Naive thymus-derived CD4-positive, alpha-beta T cell (primary cell): ENCODE measurements at regions of chr5 and their contacts with region 1.

Region 1: GRCh38 chr5:32422697-32423096 is 21.8 kb downstream of the ZFR start:
- DNase-seq: no peak
- ATAC-seq: no peak
- H3K4me3 ChIP-seq: no peak overlapping the region
- H3K4me3 Mint-ChIP-seq: peak overlapping the region in 1 of 10 donors; percentile 8
- H3K27ac ChIP-seq: no peak overlapping the region
- H3K27ac Mint-ChIP-seq: peak overlapping the region in 3 of 9 donors; percentile 7 to 58 (median 23)
- H3K4me1 ChIP-seq: peaks cover 0 to 4% of the 10 kb centered on the region in 2 donors
- H3K4me1 Mint-ChIP-seq: peaks cover 19 to 76% (median 55%) of the 10 kb centered on the region in 7 donors
- H3K27me3 ChIP-seq: no peaks in the 10 kb centered on the region
- H3K27me3 Mint-ChIP-seq: no peaks in the 10 kb centered on the region

Region 2: DNA sequence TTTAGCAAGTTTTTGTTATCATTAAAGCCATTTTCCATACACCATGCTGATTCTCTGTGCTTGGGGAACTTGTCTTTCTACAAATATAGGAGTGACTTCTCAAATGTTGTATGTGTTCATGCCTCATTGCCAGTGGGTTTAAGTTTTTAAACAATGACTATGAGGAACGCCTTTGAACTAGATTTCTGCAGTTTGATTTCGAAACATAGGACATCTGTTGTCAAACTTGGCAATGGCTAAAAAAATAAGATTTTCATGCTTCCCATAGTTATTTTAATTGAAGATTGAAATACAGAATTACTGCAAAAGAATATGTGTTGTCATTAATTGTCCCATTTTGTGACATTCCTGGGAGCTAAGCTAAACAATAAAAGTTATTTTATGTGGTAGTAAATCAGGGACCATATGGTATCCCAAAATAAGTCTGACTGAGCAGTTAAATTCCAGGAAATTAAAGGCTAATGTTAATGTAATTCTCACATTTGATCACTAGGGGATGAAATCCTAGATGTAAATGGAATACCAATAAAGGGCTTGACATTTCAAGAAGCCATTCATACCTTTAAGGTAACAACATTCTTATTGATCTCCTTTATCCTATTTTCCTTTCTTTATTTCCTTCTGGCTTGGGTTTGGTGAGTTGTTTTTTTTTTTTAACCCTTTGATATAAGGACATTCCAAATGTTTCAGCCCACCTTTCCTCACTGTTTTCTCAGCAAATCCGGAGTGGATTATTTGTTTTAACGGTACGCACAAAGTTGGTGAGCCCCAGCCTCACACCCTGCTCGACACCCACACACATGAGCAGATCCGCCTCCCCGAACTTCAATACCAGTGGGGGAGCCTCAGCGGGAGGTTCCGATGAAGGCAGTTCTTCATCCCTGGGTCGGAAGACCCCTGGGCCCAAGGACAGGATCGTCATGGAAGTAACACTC is 365.3 kb before region 1 on chr5:
- CTCF ChIA-PET with region 1: no interaction called
- POLR2A ChIA-PET with region 1: no interaction called
- intact Hi-C with region 1: no loop called
- DNase-seq: no peak
- ATAC-seq: no peak
- H3K4me3 ChIP-seq: no peak overlapping the region
- H3K4me3 Mint-ChIP-seq: no peak overlapping the region
- H3K27ac ChIP-seq: no peak overlapping the region
- H3K27ac Mint-ChIP-seq: no peak overlapping the region
- H3K4me1 ChIP-seq: no peaks in the 10 kb centered on the region
- H3K4me1 Mint-ChIP-seq: no peaks in the 10 kb centered on the region
- H3K27me3 ChIP-seq: no peaks in the 10 kb centered on the region
- H3K27me3 Mint-ChIP-seq: no peaks in the 10 kb centered on the region

Region 3: GRCh38 chr5:32346869-32347268 is 75.8 kb before region 1 on chr5:
- CTCF ChIA-PET with region 1: no interaction called
- POLR2A ChIA-PET with region 1: no interaction called
- intact Hi-C with region 1: no loop called
- DNase-seq: no peak
- ATAC-seq: no peak
- H3K4me3 ChIP-seq: no peak overlapping the region
- H3K4me3 Mint-ChIP-seq: no peak overlapping the region
- H3K27ac ChIP-seq: no peak overlapping the region
- H3K27ac Mint-ChIP-seq: no peak overlapping the region
- H3K4me1 ChIP-seq: no peaks in the 10 kb centered on the region
- H3K4me1 Mint-ChIP-seq: no peaks in the 10 kb centered on the region
- H3K27me3 ChIP-seq: no peaks in the 10 kb centered on the region
- H3K27me3 Mint-ChIP-seq: peaks cover 0 to 7% (median 0%) of the 10 kb centered on the region in 5 donors

Region 4: DNA sequence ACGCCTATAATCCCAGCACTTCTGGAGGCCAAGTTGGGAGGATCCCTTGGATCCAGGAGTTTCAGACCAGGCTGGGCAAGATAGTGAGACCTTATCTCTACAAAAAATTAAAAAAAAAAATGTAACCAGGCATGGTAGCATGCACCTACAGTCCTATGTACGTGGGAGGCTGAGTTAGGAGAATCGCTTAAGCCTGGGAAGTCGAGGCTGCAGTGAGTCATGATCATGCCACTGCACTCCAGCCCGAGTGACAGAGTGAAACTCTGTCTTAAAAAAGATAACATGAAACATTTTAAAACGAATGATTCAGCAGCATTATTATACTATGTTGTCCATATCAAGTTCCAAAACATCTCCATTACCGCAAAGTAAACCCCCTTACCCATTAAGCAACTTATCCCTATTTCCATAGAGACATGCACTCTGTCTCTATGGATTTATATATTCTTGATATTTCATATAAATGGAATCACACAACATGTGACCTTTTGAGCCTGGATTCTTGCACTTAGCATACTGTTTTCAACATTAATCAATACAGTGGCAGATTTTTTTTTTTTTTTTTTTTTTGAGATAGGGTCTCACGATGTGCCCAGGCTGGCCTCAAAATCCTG is 53.0 kb before region 1 on chr5:
- CTCF ChIA-PET with region 1: no interaction called
- POLR2A ChIA-PET with region 1: no interaction called
- intact Hi-C with region 1: no loop called
- DNase-seq: no peak
- ATAC-seq: no peak
- H3K4me3 ChIP-seq: no peak overlapping the region
- H3K4me3 Mint-ChIP-seq: no peak overlapping the region
- H3K27ac ChIP-seq: no peak overlapping the region
- H3K27ac Mint-ChIP-seq: no peak overlapping the region
- H3K4me1 ChIP-seq: no peaks in the 10 kb centered on the region
- H3K4me1 Mint-ChIP-seq: peaks cover 0 to 3% (median 0%) of the 10 kb centered on the region in 7 donors
- H3K27me3 ChIP-seq: no peaks in the 10 kb centered on the region
- H3K27me3 Mint-ChIP-seq: no peaks in the 10 kb centered on the region

Region 5: GRCh38 chr5:32394981-32395380 is 27.7 kb before region 1 on chr5:
- CTCF ChIA-PET with region 1: no interaction called
- POLR2A ChIA-PET with region 1: no interaction called
- intact Hi-C with region 1: no loop called
- DNase-seq: no peak
- ATAC-seq: no peak
- H3K4me3 ChIP-seq: no peak overlapping the region
- H3K4me3 Mint-ChIP-seq: no peak overlapping the region
- H3K27ac ChIP-seq: no peak overlapping the region
- H3K27ac Mint-ChIP-seq: no peak overlapping the region
- H3K4me1 ChIP-seq: no peaks in the 10 kb centered on the region
- H3K4me1 Mint-ChIP-seq: no peaks in the 10 kb centered on the region
- H3K27me3 ChIP-seq: no peaks in the 10 kb centered on the region
- H3K27me3 Mint-ChIP-seq: no peaks in the 10 kb centered on the region

Region 6: GRCh38 chr5:32436553-32437242 is 14.0 kb after region 1 on chr5:
- CTCF ChIA-PET with region 1: no interaction called
- POLR2A ChIA-PET with region 1: interaction called, 3 read pairs
- intact Hi-C with region 1: loop called in 1 of 2 experiments (anchors 2 kb)
- DNase-seq: no peak
- ATAC-seq: no peak
- H3K4me3 ChIP-seq: no peak overlapping the region
- H3K4me3 Mint-ChIP-seq: no peak overlapping the region
- H3K27ac ChIP-seq: no peak overlapping the region
- H3K27ac Mint-ChIP-seq: no peak overlapping the region
- H3K4me1 ChIP-seq: peaks cover 16 to 18% of the 10 kb centered on the region in 2 donors
- H3K4me1 Mint-ChIP-seq: peaks cover 27 to 90% (median 74%) of the 10 kb centered on the region in 7 donors
- H3K27me3 ChIP-seq: no peaks in the 10 kb centered on the region
- H3K27me3 Mint-ChIP-seq: no peaks in the 10 kb centered on the region